HEK293 (cell line): ENCODE measurements at regions of chr1 and their contacts with region 1.

Region 1: GRCh38 chr1:22416555-22417454 is 34.8 kb upstream of the ZBTB40 start:
- H3K4me3 ChIP-seq: no peak overlapping the region
- H3K27ac ChIP-seq: no peak overlapping the region
- H3K4me1 ChIP-seq: peaks cover 5% of the 10 kb centered on the region; the same call in 1 of the 2 replicates
- CTCF ChIP-seq: peak; percentile 92

Region 2: GRCh38 chr1:22031214-22031962 is 385.4 kb before region 1 on chr1:
- CTCF ChIA-PET with region 1: no interaction called
- POLR2A ChIA-PET with region 1: no interaction called
- H3K4me3 ChIP-seq: no peak overlapping the region
- H3K27ac ChIP-seq: no peak overlapping the region
- H3K4me1 ChIP-seq: no peaks in the 10 kb centered on the region
- CTCF ChIP-seq: no peak

Region 3: GRCh38 chr1:22105611-22106207 is 311.1 kb before region 1 on chr1:
- CTCF ChIA-PET with region 1: interaction called, 27 read pairs
- POLR2A ChIA-PET with region 1: no interaction called
- H3K4me3 ChIP-seq: no peak overlapping the region
- H3K27ac ChIP-seq: no peak overlapping the region
- H3K4me1 ChIP-seq: peaks cover 4% of the 10 kb centered on the region; the same call in 1 of the 2 replicates
- CTCF ChIP-seq: 0 out of 2 replicates have a peak, but pooled peaks have one; percentile 52

Region 4: GRCh38 chr1:22131875-22132486 is 284.8 kb before region 1 on chr1:
- CTCF ChIA-PET with region 1: interaction called, 61 read pairs
- POLR2A ChIA-PET with region 1: no interaction called
- H3K4me3 ChIP-seq: no peak overlapping the region
- H3K27ac ChIP-seq: no peak overlapping the region
- H3K4me1 ChIP-seq: no peaks in the 10 kb centered on the region
- CTCF ChIP-seq: peak; percentile 90

Region 5: DNA sequence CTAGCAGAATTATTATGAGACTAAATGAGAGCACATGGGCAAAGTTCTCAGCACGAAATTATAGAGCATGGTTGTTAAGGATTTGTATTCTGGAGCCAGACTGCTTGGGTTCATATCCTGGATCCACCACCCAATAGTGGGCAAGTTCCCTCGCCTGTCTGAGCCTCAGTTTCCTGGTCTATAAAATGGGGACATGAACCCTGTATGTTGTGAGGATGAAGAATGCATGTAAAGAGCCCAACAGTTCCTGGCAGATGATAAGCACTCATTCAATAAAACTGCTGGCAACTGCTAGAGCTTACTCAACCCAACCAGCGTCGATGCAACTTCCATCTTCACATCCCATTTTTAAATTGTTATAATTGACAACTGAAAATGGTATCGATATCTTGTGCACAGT is 12.3 kb before region 1 on chr1:
- CTCF ChIA-PET with region 1: interaction called, 10 read pairs
- POLR2A ChIA-PET with region 1: no interaction called
- H3K4me3 ChIP-seq: no peak overlapping the region
- H3K27ac ChIP-seq: no peak overlapping the region
- H3K4me1 ChIP-seq: no peaks in the 10 kb centered on the region
- CTCF ChIP-seq: no peak

Region 6: GRCh38 chr1:22641906-22642636 is 225.3 kb after region 1 on chr1:
- CTCF ChIA-PET with region 1: interaction called, 93 read pairs
- POLR2A ChIA-PET with region 1: no interaction called
- H3K4me3 ChIP-seq: no peak overlapping the region
- H3K27ac ChIP-seq: no peak overlapping the region
- H3K4me1 ChIP-seq: no peaks in the 10 kb centered on the region
- CTCF ChIP-seq: peak; percentile 95

Region 7: DNA sequence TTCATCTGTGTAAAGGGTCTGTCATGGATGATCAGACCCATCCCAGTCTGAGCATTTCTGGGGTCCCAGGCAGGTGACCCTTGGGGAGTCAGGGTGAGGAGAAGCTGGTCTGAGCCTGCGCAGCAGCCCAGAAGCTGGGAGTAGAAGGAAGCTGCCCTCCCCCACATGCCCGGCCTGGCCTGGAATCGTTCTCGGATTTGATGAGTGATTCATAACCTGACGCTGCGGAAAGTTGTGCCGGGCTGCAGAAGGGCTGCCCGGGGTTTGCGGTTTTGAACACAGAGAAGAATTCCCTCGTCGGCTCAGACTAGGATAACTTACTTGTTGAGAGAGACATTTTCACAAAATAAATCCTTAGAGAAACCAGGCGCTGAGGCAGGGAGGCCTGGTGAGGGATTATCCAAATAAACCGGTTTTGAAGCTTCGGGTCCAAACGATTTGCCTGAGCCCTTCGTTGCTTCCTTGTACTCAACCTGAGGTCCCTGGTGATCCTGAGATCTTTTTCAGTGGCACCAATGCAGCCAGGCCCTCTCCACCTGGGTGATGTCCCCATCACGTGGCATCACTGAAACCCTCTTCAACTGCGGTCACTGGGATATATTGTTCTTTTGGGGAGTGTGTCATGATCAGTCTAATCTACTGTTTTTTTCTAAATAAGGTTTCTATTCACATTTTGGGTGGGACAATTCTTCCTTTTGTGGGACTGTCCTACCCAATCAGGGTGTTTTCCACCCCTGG is 323.0 kb after region 1 on chr1:
- CTCF ChIA-PET with region 1: no interaction called
- POLR2A ChIA-PET with region 1: no interaction called
- H3K4me3 ChIP-seq: no peak overlapping the region
- H3K27ac ChIP-seq: no peak overlapping the region
- H3K4me1 ChIP-seq: peaks cover 5% of the 10 kb centered on the region; the same call in 1 of the 2 replicates
- CTCF ChIP-seq: no peak